ENCODE measurements at regions of chr5 and their contacts with region 1.

Region 1: GRCh38 chr5:151164686-151165392 is 7.3 kb upstream of the ANXA6 start:
- DNase-seq: peak; percentile 78 to 84 (median 81)
- H3K4me3 ChIP-seq: no peak overlapping the region
- H3K4me3 Mint-ChIP-seq: peak overlapping the region in 1 of 8 donors; percentile 4
- H3K27ac ChIP-seq: no peak overlapping the region
- H3K27ac Mint-ChIP-seq: peak overlapping the region in 5 of 7 donors; percentile 10 to 75 (median 52)
- H3K4me1 ChIP-seq: no peaks in the 10 kb centered on the region
- H3K4me1 Mint-ChIP-seq: peaks cover 14 to 22% (median 19%) of the 10 kb centered on the region in 4 donors
- H3K27me3 ChIP-seq: no peaks in the 10 kb centered on the region
- H3K27me3 Mint-ChIP-seq: no peaks in the 10 kb centered on the region

Region 2: DNA sequence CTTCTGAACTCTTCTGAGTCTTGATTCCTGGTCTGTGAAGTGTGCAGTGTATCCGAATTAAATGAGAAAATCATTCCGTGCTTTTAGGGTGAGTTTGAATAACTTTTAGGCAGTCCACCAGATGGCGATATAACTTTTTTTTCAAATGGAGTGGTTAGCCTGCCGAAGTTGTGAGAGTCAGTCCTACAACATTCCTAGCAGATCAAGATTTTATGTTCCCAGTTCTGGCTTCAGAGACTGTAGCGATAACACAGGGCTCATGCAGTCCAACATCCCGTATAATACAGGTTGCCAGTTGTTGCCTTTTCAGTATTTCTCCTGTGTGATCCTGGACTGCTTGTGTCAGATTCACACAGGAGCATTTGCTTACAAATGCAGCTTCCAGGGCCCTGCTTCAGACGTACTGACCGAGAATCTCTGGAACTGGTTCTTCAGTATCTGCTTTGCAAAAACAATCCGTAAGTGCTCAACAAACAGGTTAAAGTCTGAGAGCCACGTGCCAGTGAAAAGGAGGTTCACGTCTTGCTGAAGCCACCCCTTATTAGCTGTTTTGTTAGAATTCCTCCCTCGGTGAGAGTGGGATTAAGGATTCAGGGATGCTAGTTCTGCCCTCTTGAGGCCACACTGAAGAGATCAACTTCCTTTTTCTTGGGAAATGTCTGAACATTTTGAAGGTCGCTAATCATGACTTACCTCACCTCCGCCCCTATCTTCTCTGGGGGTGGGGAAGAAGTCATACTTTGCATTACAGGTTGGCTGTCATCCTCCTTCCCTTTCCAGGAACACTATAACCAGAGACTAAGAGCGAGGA is 363.5 kb before region 1 on chr5:
- CTCF ChIA-PET with region 1: interaction called, 3 read pairs
- POLR2A ChIA-PET with region 1: no interaction called
- intact Hi-C with region 1: loop called (anchors 2 kb)
- DNase-seq: peak in 4 of 5 donors; percentile 42 to 50 (median 44)
- H3K4me3 ChIP-seq: no peak overlapping the region
- H3K4me3 Mint-ChIP-seq: no peak overlapping the region
- H3K27ac ChIP-seq: no peak overlapping the region
- H3K27ac Mint-ChIP-seq: peak overlapping the region in 2 of 7 donors; percentile 37 to 55
- H3K4me1 ChIP-seq: peaks cover 8% of the 10 kb centered on the region
- H3K4me1 Mint-ChIP-seq: peaks cover 3 to 5% (median 5%) of the 10 kb centered on the region in 4 donors
- H3K27me3 ChIP-seq: no peaks in the 10 kb centered on the region
- H3K27me3 Mint-ChIP-seq: peaks cover 3 to 6% of the 10 kb centered on the region in 2 donors

Region 3: GRCh38 chr5:151141535-151141934 is 23.3 kb before region 1 on chr5:
- CTCF ChIA-PET with region 1: interaction called, 2,066 read pairs
- POLR2A ChIA-PET with region 1: interaction called, 14 read pairs
- intact Hi-C with region 1: no loop called
- DNase-seq: peak; percentile 47 to 84 (median 58)
- H3K4me3 ChIP-seq: peak overlapping the region in 1 of 2 donors; percentile 23
- H3K4me3 Mint-ChIP-seq: peak overlapping the region; percentile 71 to 91 (median 84)
- H3K27ac ChIP-seq: peak overlapping the region; percentile 68
- H3K27ac Mint-ChIP-seq: peak overlapping the region; percentile 90 to 97 (median 94)
- H3K4me1 ChIP-seq: peaks cover 91% of the 10 kb centered on the region
- H3K4me1 Mint-ChIP-seq: peaks cover 75 to 100% (median 94%) of the 10 kb centered on the region in 4 donors
- H3K27me3 ChIP-seq: no peaks in the 10 kb centered on the region
- H3K27me3 Mint-ChIP-seq: no peaks in the 10 kb centered on the region

Region 4: GRCh38 chr5:151183451-151184245 is 18.8 kb after region 1 on chr5:
- CTCF ChIA-PET with region 1: interaction called, 13 read pairs
- POLR2A ChIA-PET with region 1: no interaction called
- intact Hi-C with region 1: no loop called
- DNase-seq: no peak
- H3K4me3 ChIP-seq: no peak overlapping the region
- H3K4me3 Mint-ChIP-seq: no peak overlapping the region
- H3K27ac ChIP-seq: no peak overlapping the region
- H3K27ac Mint-ChIP-seq: peak overlapping the region in 4 of 7 donors; percentile 29 to 63 (median 40)
- H3K4me1 ChIP-seq: no peaks in the 10 kb centered on the region
- H3K4me1 Mint-ChIP-seq: peaks cover 8 to 11% (median 10%) of the 10 kb centered on the region in 4 donors
- H3K27me3 ChIP-seq: no peaks in the 10 kb centered on the region
- H3K27me3 Mint-ChIP-seq: no peaks in the 10 kb centered on the region

Region 5: DNA sequence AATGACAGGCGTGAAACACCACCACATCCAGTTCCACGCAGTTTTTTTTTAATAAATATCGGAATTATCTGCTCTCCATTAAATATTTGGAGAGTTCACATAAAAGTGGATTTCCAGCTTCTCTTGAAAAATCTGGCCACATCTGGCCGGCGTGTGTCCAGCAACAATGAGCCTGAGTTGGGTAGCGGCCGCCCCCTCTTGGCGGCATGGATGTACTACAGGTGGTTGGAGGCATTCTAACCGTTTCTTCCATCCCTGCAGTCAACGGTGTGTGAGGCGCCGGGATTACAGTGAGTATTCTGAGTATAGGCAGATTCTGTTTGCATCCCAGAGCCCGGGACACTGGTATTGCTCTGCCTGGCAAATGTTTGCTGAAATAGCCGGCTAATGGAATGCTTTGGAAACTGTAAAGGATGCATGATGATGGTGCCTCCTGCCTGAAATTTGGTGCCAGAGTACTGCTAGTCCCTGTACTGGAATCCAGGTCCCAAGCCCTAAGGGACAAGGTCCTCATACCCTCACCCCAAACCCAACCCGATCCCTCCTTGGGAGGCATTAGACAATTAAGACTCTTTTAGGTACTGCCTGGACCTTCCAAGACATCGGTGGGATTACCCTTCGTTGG is 74.5 kb after region 1 on chr5:
- CTCF ChIA-PET with region 1: interaction called, 159 read pairs
- POLR2A ChIA-PET with region 1: interaction called, 5 read pairs
- intact Hi-C with region 1: loop called (anchors 2 kb)
- DNase-seq: peak in 4 of 5 donors; percentile 40 to 60 (median 48)
- H3K4me3 ChIP-seq: no peak overlapping the region
- H3K4me3 Mint-ChIP-seq: no peak overlapping the region
- H3K27ac ChIP-seq: no peak overlapping the region
- H3K27ac Mint-ChIP-seq: peak overlapping the region in 3 of 7 donors; percentile 35 to 81 (median 61)
- H3K4me1 ChIP-seq: peaks cover 28% of the 10 kb centered on the region
- H3K4me1 Mint-ChIP-seq: peaks cover 17 to 24% (median 18%) of the 10 kb centered on the region in 4 donors
- H3K27me3 ChIP-seq: no peaks in the 10 kb centered on the region
- H3K27me3 Mint-ChIP-seq: no peaks in the 10 kb centered on the region

Region 6: GRCh38 chr5:151651997-151652645 is 487.3 kb after region 1 on chr5:
- CTCF ChIA-PET with region 1: no interaction called
- POLR2A ChIA-PET with region 1: no interaction called
- intact Hi-C with region 1: no loop called
- DNase-seq: peak; percentile 56 to 73 (median 68)
- H3K4me3 ChIP-seq: no peak overlapping the region
- H3K4me3 Mint-ChIP-seq: no peak overlapping the region
- H3K27ac ChIP-seq: no peak overlapping the region
- H3K27ac Mint-ChIP-seq: no peak overlapping the region
- H3K4me1 ChIP-seq: no peaks in the 10 kb centered on the region
- H3K4me1 Mint-ChIP-seq: peaks cover 0 to 2% (median 0%) of the 10 kb centered on the region in 4 donors
- H3K27me3 ChIP-seq: no peaks in the 10 kb centered on the region
- H3K27me3 Mint-ChIP-seq: peaks cover 0 to 8% of the 10 kb centered on the region in 2 donors

Region 7: DNA sequence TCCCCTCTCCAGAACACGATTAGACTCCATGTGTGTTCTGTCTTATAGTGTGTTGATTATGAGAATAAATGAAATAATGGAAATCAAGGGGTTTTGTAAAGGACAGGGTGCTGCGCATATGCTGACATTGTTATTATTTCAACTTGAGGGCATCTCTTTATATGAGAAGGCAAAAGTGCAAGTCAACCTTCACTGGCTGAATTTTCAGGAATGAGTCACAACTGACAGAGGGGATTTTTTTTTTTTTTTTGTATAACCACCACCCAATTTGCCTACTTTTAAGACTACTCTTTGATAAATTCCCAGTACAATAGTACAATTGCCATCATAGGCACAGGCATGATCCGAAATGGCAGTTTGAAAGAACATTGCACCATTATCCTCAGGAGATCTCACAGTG is 1659.5 kb after region 1 on chr5:
- CTCF ChIA-PET with region 1: no interaction called
- POLR2A ChIA-PET with region 1: no interaction called
- intact Hi-C with region 1: no loop called
- DNase-seq: no peak
- H3K4me3 ChIP-seq: no peak overlapping the region
- H3K4me3 Mint-ChIP-seq: no peak overlapping the region
- H3K27ac ChIP-seq: no peak overlapping the region
- H3K27ac Mint-ChIP-seq: no peak overlapping the region
- H3K4me1 ChIP-seq: no peaks in the 10 kb centered on the region
- H3K4me1 Mint-ChIP-seq: no peaks in the 10 kb centered on the region
- H3K27me3 ChIP-seq: no peaks in the 10 kb centered on the region
- H3K27me3 Mint-ChIP-seq: no peaks in the 10 kb centered on the region

Measured in CD4-positive, alpha-beta memory T cell (primary cell).